HCT116 (cell line): ENCODE measurements at regions of chr15 and their contacts with region 1.

Region 1: GRCh38 chr15:84570164-84570735 is 30.6 kb upstream of the ZSCAN2 start:
- DNase-seq: no peak
- ATAC-seq: peak; percentile 73
- H3K4me3 ChIP-seq: peak overlapping the region; percentile 76 to 77
- H3K27ac ChIP-seq: peak overlapping the region; percentile 82
- H3K4me1 ChIP-seq: peaks cover 0 to 15% of the 10 kb centered on the region in 2 experiments; a peak in 1 of 4 replicates
- H3K27me3 ChIP-seq: no peaks in the 10 kb centered on the region
- CTCF ChIP-seq: no peak
- POLR2A ChIP-seq: no peak
- RAD21 ChIP-seq: no peak

Region 2: DNA sequence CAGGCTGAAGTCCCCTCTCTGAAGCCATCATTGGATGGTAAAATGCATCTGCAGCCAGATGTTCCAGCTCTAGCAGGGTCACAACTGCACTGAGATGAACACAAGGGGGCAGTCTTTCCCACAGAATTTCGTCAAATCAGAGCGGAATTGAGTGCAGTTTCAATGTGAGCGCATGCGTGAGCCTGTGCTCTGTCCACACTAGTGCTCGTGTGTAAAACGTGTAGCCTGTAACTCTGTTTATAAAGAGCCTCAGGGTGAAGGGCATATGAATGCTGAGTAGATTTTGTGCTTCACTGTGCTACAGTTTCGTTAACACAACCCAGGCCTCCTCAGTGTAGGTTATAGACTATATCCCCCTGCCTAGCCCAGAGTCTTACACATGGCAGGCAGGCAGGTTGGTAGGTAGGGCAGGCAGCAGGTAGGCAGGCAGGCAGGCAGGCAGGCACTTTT is 427.3 kb before region 1 on chr15:
- CTCF ChIA-PET with region 1: no interaction called
- POLR2A ChIA-PET with region 1: no interaction called
- RAD21 ChIA-PET with region 1: no interaction called
- intact Hi-C with region 1: loop called (anchors 10 kb)
- DNase-seq: peak; percentile 81
- ATAC-seq: peak; percentile 99
- H3K4me3 ChIP-seq: no peak overlapping the region
- H3K27ac ChIP-seq: no peak overlapping the region
- H3K4me1 ChIP-seq: peaks cover 0 to 5% of the 10 kb centered on the region in 2 experiments; a peak in 1 of 4 replicates
- H3K27me3 ChIP-seq: no peaks in the 10 kb centered on the region
- CTCF ChIP-seq: peak; percentile 74 to 87 (median 86); a peak in 5 of 6 replicates
- POLR2A ChIP-seq: no peak
- RAD21 ChIP-seq: peak; percentile 86

Region 3: GRCh38 chr15:84552896-84553295 is 17.4 kb before region 1 on chr15:
- CTCF ChIA-PET with region 1: interaction called, 11 read pairs
- POLR2A ChIA-PET with region 1: no interaction called
- RAD21 ChIA-PET with region 1: no interaction called
- intact Hi-C with region 1: no loop called
- DNase-seq: no peak
- ATAC-seq: no peak
- H3K4me3 ChIP-seq: no peak overlapping the region
- H3K27ac ChIP-seq: no peak overlapping the region
- H3K4me1 ChIP-seq: no peaks in the 10 kb centered on the region
- H3K27me3 ChIP-seq: no peaks in the 10 kb centered on the region
- CTCF ChIP-seq: no peak
- POLR2A ChIP-seq: no peak
- RAD21 ChIP-seq: no peak

Region 4: GRCh38 chr15:84588053-84588874 is 18.0 kb after region 1 on chr15:
- CTCF ChIA-PET with region 1: interaction called, 14 read pairs
- POLR2A ChIA-PET with region 1: interaction called, 3 read pairs
- RAD21 ChIA-PET with region 1: no interaction called
- intact Hi-C with region 1: no loop called
- DNase-seq: peak; percentile 85
- ATAC-seq: peak; percentile 99
- H3K4me3 ChIP-seq: peak overlapping the region; percentile 35 to 47
- H3K27ac ChIP-seq: no peak overlapping the region
- H3K4me1 ChIP-seq: peaks cover 0 to 11% of the 10 kb centered on the region in 2 experiments; a peak in 2 of 4 replicates
- H3K27me3 ChIP-seq: no peaks in the 10 kb centered on the region
- CTCF ChIP-seq: peak; percentile 62 to 72 (median 66)
- POLR2A ChIP-seq: no peak
- RAD21 ChIP-seq: peak; percentile 83